H1 (cell line): ENCODE measurements at regions of chr10 and their contacts with region 1.

Region 1: DNA sequence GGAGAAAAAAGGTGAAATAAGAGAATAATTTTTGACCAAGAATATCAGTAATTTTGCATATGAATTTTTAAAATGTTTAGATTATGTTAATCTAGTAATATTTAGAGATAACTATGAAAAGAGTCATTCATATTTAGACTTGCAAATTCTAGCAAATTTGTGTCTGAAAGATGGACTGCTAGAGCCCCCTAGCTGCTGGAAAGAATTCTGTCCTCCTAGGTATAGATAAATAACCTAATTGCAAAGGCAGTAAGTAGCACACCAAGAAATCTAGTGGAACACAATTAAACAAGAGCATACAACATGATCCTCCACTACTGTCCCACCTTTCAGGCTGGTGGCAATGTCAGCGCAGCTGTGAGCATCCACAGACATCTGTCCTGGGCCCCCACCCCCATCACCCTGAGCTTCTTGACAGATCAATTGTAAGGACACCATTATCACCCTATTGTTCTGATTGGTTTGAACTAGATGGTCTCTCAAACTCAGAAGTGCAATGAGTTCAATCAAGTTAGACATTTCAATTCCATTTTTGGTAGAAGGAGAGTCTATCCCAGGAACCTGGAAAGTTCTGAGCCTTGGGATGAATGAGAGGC is 15.0 kb upstream of the GFRA1 start:
- DNase-seq: no peak
- H3K4me3 ChIP-seq: no peak overlapping the region
- H3K27ac ChIP-seq: no peak overlapping the region
- H3K4me1 ChIP-seq: no peaks in the 10 kb centered on the region
- H3K27me3 ChIP-seq: no peaks in the 10 kb centered on the region
- CTCF ChIP-seq: peak in 2 of 3 experiments; percentile 47 to 61; a peak in 2 of 4 replicates
- EP300 ChIP-seq: no peak
- POLR2A ChIP-seq: no peak
- RAD21 ChIP-seq: peak; percentile 85 to 86

Region 2: GRCh38 chr10:115706026-115706781 is 581.8 kb before region 1 on chr10:
- CTCF ChIA-PET with region 1: interaction called, 22 read pairs
- POLR2A ChIA-PET with region 1: no interaction called
- DNase-seq: no peak
- H3K4me3 ChIP-seq: no peak overlapping the region
- H3K27ac ChIP-seq: no peak overlapping the region
- H3K4me1 ChIP-seq: no peaks in the 10 kb centered on the region
- H3K27me3 ChIP-seq: no peaks in the 10 kb centered on the region
- CTCF ChIP-seq: peak in 2 of 3 experiments; percentile 38 to 53; a peak in 2 of 4 replicates
- EP300 ChIP-seq: no peak
- POLR2A ChIP-seq: no peak
- RAD21 ChIP-seq: peak; percentile 63 to 64

Region 3: GRCh38 chr10:116080553-116080952 is 207.5 kb before region 1 on chr10:
- CTCF ChIA-PET with region 1: interaction called, 10 read pairs
- POLR2A ChIA-PET with region 1: no interaction called
- DNase-seq: peak in 1 of 2 experiments; percentile 41
- H3K4me3 ChIP-seq: no peak overlapping the region
- H3K27ac ChIP-seq: no peak overlapping the region
- H3K4me1 ChIP-seq: peaks cover 0 to 5% (median 0%) of the 10 kb centered on the region in 4 experiments; a peak in 1 of 7 replicates
- H3K27me3 ChIP-seq: no peaks in the 10 kb centered on the region
- CTCF ChIP-seq: peak in 1 of 3 experiments; percentile 13; a peak in 1 of 4 replicates
- EP300 ChIP-seq: no peak
- POLR2A ChIP-seq: no peak
- RAD21 ChIP-seq: no peak; a peak in 1 of 4 replicates

Region 4: GRCh38 chr10:116147147-116147905 is 140.7 kb before region 1 on chr10:
- CTCF ChIA-PET with region 1: no interaction called
- POLR2A ChIA-PET with region 1: no interaction called
- DNase-seq: peak in 1 of 2 experiments; percentile 35
- H3K4me3 ChIP-seq: no peak overlapping the region
- H3K27ac ChIP-seq: no peak overlapping the region
- H3K4me1 ChIP-seq: no peaks in the 10 kb centered on the region; a peak in 1 of 7 replicates
- H3K27me3 ChIP-seq: no peaks in the 10 kb centered on the region
- CTCF ChIP-seq: no peak
- EP300 ChIP-seq: no peak
- POLR2A ChIP-seq: no peak
- RAD21 ChIP-seq: no peak

Region 5: GRCh38 chr10:116263918-116264655 is 23.9 kb before region 1 on chr10:
- CTCF ChIA-PET with region 1: interaction called, 14 read pairs
- POLR2A ChIA-PET with region 1: no interaction called
- DNase-seq: no peak
- H3K4me3 ChIP-seq: no peak overlapping the region
- H3K27ac ChIP-seq: no peak overlapping the region
- H3K4me1 ChIP-seq: no peaks in the 10 kb centered on the region; a peak in 1 of 7 replicates
- H3K27me3 ChIP-seq: peaks cover under 1 to 7% (median 6%) of the 10 kb centered on the region in 4 experiments; a peak in 5 of 7 replicates
- CTCF ChIP-seq: no peak
- EP300 ChIP-seq: no peak
- POLR2A ChIP-seq: no peak
- RAD21 ChIP-seq: no peak

Region 6: GRCh38 chr10:116298586-116298985 is 10.6 kb after region 1 on chr10:
- CTCF ChIA-PET with region 1: interaction called, 13 read pairs
- POLR2A ChIA-PET with region 1: no interaction called
- DNase-seq: no peak
- H3K4me3 ChIP-seq: no peak overlapping the region
- H3K27ac ChIP-seq: no peak overlapping the region
- H3K4me1 ChIP-seq: no peaks in the 10 kb centered on the region
- H3K27me3 ChIP-seq: no peaks in the 10 kb centered on the region
- CTCF ChIP-seq: no peak
- EP300 ChIP-seq: no peak
- POLR2A ChIP-seq: no peak
- RAD21 ChIP-seq: no peak

Region 7: DNA sequence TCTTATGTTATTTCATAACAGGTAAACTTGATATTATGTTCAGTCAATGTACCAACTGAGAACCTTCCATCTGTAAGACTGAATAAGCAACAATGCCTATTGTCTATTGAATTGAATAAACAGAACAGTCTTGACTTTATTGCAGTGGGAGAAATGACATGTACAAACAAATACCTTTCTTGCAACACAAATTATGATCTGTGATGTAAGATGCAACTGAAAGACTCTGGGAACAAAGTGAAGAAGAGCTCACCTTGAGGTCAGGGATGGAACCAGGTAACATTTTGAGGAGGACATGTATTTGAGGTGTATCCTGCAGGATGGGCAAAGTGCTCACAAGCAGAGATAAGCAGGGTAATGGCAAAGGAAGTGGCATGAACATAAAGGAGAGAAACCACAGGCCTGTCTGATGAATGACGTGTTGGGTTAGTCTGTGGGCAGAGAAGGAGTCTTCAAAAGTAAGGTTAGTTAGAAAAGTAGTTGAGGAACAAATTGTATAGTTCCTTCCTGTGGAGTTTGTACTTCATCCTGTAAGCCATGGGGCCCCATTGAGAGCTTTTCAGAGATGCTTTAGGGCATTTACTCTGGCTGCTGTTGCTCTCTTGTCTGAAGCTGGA is 149.2 kb after region 1 on chr10:
- CTCF ChIA-PET with region 1: no interaction called
- POLR2A ChIA-PET with region 1: no interaction called
- DNase-seq: no peak
- H3K4me3 ChIP-seq: no peak overlapping the region
- H3K27ac ChIP-seq: no peak overlapping the region
- H3K4me1 ChIP-seq: no peaks in the 10 kb centered on the region
- H3K27me3 ChIP-seq: no peaks in the 10 kb centered on the region
- CTCF ChIP-seq: no peak
- EP300 ChIP-seq: no peak
- POLR2A ChIP-seq: no peak
- RAD21 ChIP-seq: no peak

Region 8: GRCh38 chr10:116536810-116537209 is 248.8 kb after region 1 on chr10:
- CTCF ChIA-PET with region 1: no interaction called
- POLR2A ChIA-PET with region 1: no interaction called
- DNase-seq: no peak
- H3K4me3 ChIP-seq: no peak overlapping the region
- H3K27ac ChIP-seq: no peak overlapping the region
- H3K4me1 ChIP-seq: no peaks in the 10 kb centered on the region; a peak in 2 of 7 replicates
- H3K27me3 ChIP-seq: no peaks in the 10 kb centered on the region
- CTCF ChIP-seq: no peak
- EP300 ChIP-seq: no peak
- POLR2A ChIP-seq: no peak
- RAD21 ChIP-seq: no peak